ENCODE measurements at regions of chr12 and their contacts with region 1.

Region 1: DNA sequence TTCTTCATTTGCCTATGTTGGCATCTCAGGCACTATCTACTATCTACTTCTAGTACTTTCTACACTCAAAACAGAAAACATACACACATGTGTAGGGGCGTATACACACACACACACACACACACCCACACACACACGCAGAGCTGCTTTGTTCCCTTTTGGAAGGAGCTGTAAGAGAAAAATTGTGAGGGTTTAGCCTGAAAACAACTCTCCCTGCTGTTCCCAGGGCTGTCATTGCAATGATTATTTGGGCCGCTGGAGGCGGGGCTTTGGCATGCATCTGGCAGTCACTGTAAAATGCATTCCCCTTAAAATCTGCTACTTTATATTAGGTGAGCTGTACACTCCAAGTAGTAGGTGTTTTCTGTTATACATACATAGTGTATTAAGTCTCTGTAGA is 29.1 kb upstream of the SLC38A2 start:
- DNase-seq: no peak
- ATAC-seq: peak; percentile 33
- H3K4me3 ChIP-seq: no peak overlapping the region
- H3K27ac ChIP-seq: peak overlapping the region; percentile 40
- H3K4me1 ChIP-seq: peaks cover 28% of the 10 kb centered on the region
- H3K27me3 ChIP-seq: no peaks in the 10 kb centered on the region
- CTCF ChIP-seq: no peak

Region 2: DNA sequence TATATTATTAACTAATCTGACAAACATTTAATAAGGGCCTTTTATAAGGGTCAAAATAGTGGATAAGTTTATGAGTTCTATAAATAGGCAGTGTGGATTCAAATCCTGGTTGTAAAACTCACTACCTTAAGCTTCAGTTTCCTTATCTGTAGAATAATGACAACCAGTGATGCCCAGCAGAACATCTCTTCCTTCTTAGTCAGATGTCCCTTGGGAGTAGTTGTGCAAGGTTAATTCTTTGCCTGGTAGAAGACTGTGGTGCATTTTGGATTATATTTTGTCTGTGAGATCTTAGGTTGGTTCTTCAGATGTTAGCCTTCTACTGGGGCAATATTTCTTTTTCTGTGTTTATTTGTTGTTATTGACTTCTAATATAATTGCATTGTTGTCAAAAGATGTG is 612.6 kb before region 1 on chr12:
- CTCF ChIA-PET with region 1: no interaction called
- POLR2A ChIA-PET with region 1: no interaction called
- intact Hi-C with region 1: no loop called
- DNase-seq: no peak
- ATAC-seq: no peak
- H3K4me3 ChIP-seq: no peak overlapping the region
- H3K27ac ChIP-seq: no peak overlapping the region
- H3K4me1 ChIP-seq: no peaks in the 10 kb centered on the region
- H3K27me3 ChIP-seq: no peaks in the 10 kb centered on the region
- CTCF ChIP-seq: no peak

Region 3: GRCh38 chr12:46430340-46430948 is 28.8 kb after region 1 on chr12:
- CTCF ChIA-PET with region 1: interaction called, 3 read pairs
- POLR2A ChIA-PET with region 1: interaction called, 4 read pairs
- intact Hi-C with region 1: loop called (anchors 1 kb)
- DNase-seq: peak; percentile 95
- ATAC-seq: peak; percentile 77
- H3K4me3 ChIP-seq: peak overlapping the region; percentile 28; the same call in 1 of the 2 replicates
- H3K27ac ChIP-seq: peak overlapping the region; percentile 96
- H3K4me1 ChIP-seq: peaks cover 45% of the 10 kb centered on the region
- H3K27me3 ChIP-seq: no peaks in the 10 kb centered on the region
- CTCF ChIP-seq: no peak